RWPE1 (cell line): ENCODE measurements at regions of chr22 and their contacts with region 1.

Region 1: DNA sequence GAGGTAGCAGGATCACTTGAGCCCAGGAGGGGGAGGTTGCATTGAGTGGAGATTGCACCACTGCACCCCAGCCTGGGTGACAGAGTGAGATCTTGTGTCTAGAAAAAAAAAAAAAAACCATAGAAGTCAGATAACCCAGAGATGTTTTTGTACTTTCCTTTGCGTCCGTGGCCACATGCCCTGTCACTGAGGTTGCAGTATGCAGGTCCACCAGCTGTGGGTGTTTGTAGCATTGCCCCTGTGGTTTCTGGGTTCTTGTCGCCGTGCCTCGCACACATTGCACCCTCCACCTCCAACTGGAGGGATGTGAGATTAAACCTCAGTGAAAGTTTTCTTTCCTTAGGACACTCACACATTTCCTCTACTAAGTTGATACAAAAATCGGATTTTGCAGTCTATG is 70.3 kb downstream of the TNRC6B start:
- DNase-seq: no peak
- H3K27ac ChIP-seq: no peak overlapping the region
- CTCF ChIP-seq: no peak

Region 2: DNA sequence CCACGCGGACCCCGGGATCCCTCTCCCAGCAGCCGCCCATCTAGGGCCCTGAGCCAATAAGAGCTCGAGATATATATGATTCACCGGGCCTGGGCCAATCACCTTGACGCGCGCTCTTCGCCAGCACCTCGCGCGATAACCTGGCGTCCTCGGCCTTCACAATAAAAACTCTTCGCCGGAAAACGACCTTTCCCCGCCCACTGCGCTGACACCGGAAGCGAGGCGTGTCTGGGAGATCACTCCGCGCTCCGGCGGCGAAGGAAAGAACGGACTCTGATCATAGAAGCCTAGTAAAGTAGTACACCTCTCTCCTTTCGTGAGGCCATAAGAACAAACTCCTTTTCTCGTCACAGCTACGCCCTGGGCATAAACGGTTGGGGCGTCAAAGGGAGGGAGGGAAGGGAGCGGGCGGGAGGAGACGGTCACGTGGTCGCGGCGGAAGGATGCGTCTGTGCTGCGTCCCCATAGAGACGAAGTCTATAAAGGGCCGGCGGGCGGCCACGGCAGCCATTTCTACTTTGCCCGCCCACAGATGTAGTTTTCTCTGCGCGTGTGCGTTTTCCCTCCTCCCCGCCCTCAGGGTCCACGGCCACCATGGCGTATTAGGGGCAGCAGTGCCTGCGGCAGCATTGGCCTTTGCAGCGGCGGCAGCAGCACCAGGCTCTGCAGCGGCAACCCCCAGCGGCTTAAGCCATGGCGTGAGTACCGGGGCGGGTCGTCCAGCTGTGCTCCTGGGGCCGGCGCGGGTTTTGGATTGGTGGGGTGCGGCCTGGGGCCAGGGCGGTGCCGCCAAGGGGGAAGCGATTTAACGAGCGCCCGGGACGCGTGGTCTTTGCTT is 727.7 kb before region 1 on chr22 and contains the start of gene ATF4:
- CTCF ChIA-PET with region 1: no interaction called
- POLR2A ChIA-PET with region 1: interaction called, 17 read pairs
- DNase-seq: peak; percentile 93
- H3K27ac ChIP-seq: peak within 1 kb of the TSS; percentile 98
- CTCF ChIP-seq: no peak